Mammary epithelial cell (primary cell): ENCODE measurements at regions of chr15 and their contacts with region 1.

Region 1: DNA sequence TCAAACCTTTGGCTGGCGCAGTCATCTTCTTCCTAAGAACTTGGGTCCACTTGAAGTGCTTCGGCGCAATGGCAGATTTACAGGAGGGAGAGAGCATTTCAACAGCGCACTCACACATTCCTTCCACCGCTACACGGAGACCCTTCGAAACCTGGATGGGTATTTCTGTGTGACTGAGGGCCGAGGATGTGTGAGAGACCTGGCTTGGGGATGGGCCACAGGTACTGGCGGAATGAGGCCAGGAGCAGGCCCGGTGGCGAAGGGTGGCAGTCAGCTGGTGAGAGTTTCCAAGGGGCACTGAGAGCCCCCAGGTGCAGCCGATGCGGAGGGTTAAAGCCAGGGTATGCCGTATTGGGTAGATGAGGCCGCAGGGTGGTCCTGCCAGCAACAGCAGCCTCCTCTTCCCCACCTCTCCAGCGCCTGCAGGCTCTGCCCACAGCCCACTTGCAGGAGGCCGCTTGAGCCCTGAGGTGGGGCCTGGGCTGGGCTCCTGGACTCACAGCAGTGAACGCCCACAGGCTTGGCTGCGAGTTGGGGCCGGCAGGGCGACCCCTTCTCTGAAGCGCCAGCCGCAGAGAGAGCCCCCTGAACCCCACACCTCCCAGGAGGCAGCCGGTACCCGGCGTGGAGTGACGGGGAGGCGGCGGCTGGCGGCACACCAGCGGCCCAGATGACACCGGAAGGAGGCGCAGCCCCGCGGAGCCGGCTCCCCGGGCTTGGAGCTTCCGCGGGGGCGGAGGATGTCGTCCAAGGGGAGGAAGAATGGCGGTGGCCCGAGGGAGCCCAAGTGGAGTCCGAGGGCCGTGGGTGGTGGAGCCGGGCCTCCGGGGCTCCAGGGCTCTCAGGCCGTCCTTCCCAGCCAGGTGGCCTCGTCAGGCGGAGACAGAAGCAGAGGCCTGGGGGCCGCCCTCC is 166.5 kb downstream of the NSMCE3 start:
- DNase-seq: no peak
- H3K4me3 ChIP-seq: peak overlapping the region in 1 of 3 experiments; percentile 30
- H3K27ac ChIP-seq: no peak overlapping the region
- H3K4me1 ChIP-seq: no peaks in the 10 kb centered on the region
- H3K27me3 ChIP-seq: no peaks in the 10 kb centered on the region
- CTCF ChIP-seq: no peak

Region 2: DNA sequence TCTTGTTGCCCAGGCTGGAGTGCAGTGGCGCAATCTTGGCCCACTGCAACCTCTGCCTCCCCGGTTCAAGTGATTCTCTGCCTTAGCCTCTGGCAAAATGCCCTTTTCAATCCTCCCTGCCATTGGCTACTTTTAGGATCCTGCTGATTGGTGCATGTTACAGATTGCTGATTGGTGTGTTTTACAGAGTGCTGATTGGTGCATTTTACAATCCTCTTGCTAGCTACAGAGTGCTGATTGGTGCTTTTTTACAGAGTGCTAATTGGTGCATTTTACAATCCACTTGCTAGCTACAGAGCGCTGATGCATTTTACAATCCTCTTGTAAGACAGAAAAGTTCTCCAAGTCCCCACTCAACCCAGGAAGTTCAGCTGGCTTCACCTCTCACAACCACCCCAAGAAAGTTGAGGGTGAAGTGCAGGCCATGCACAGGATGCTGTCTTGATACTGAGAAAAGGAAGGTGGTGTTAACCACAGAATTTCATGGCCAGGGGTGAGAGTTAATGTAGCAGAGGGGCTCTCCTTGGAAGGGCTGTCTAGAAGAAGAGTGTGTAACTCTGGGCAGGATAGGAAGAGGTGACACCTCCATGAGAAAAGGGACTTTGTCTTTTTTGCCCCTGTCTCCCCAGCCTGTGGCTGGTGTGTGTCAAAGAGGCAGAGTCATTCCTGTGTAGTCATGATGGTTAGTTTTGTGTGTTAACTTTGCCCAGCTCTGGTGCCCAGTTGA is 71.5 kb before region 1 on chr15:
- CTCF ChIA-PET with region 1: no interaction called
- dilution Hi-C with region 1: no loop called
- in situ Hi-C with region 1: no loop called
- intact Hi-C with region 1: no loop called
- DNase-seq: no peak
- H3K4me3 ChIP-seq: no peak overlapping the region
- H3K27ac ChIP-seq: no peak overlapping the region
- H3K4me1 ChIP-seq: no peaks in the 10 kb centered on the region
- H3K27me3 ChIP-seq: no peaks in the 10 kb centered on the region
- CTCF ChIP-seq: no peak

Region 3: GRCh38 chr15:29050870-29051269 is 52.3 kb before region 1 on chr15:
- CTCF ChIA-PET with region 1: no interaction called
- dilution Hi-C with region 1: no loop called
- in situ Hi-C with region 1: no loop called
- intact Hi-C with region 1: no loop called
- DNase-seq: no peak
- H3K4me3 ChIP-seq: no peak overlapping the region
- H3K27ac ChIP-seq: no peak overlapping the region
- H3K4me1 ChIP-seq: no peaks in the 10 kb centered on the region
- H3K27me3 ChIP-seq: no peaks in the 10 kb centered on the region
- CTCF ChIP-seq: no peak

Region 4: DNA sequence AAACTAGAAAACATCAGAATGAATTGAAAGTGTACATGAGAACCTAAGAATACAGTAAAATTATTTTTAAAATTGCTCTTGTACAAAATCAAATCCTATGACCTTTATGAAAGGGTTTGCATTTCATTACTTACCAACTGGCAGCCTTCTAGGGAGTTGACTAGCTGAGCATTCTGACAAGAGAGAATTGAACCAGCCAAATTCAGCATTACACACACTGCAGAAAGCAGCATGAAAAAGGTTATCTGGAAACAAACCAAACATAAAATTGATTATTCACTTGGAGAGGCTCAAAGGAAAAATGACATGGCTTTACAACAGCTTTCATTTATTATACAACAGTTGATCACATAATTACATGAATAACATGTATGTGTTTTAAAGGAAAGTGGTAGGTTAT is 149.1 kb after region 1 on chr15:
- CTCF ChIA-PET with region 1: interaction called, 10 read pairs
- dilution Hi-C with region 1: no loop called
- in situ Hi-C with region 1: no loop called
- intact Hi-C with region 1: no loop called
- DNase-seq: no peak
- H3K4me3 ChIP-seq: no peak overlapping the region
- H3K27ac ChIP-seq: no peak overlapping the region
- H3K4me1 ChIP-seq: no peaks in the 10 kb centered on the region
- H3K27me3 ChIP-seq: no peaks in the 10 kb centered on the region
- CTCF ChIP-seq: no peak